ENCODE measurements at regions of chr5 and their contacts with region 1.

Region 1: DNA sequence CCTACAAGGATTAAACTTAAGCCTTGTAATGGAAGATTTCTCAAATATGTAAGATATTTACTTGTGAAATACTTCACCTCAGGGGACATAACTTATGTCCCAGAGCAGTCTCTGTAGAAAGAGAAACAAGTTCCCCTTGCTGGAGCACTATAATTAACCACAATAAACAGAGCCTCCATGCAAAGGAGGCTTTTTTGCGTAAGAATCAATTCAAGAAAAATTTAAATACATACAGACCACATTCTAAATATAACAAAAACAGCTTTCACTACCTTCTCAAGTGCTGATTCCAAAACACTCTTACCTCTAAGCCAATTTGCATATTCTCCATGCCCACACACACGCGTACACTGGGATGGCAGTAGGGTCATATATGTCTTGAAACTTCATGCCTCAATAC is 30.7 kb upstream of the CCNB1 start:
- DNase-seq: no peak
- ATAC-seq: no peak
- H3K4me3 ChIP-seq: no peak overlapping the region
- H3K27ac ChIP-seq: no peak overlapping the region
- H3K4me1 ChIP-seq: no peaks in the 10 kb centered on the region
- H3K27me3 ChIP-seq: no peaks in the 10 kb centered on the region
- CTCF ChIP-seq: no peak

Region 2: GRCh38 chr5:68780299-68780955 is 355.9 kb before region 1 on chr5:
- CTCF ChIA-PET with region 1: no interaction called
- POLR2A ChIA-PET with region 1: no interaction called
- in situ Hi-C with region 1: no loop called
- intact Hi-C with region 1: no loop called
- DNase-seq: no peak
- ATAC-seq: no peak
- H3K4me3 ChIP-seq: no peak overlapping the region
- H3K27ac ChIP-seq: no peak overlapping the region
- H3K4me1 ChIP-seq: no peaks in the 10 kb centered on the region
- H3K27me3 ChIP-seq: no peaks in the 10 kb centered on the region
- CTCF ChIP-seq: no peak

Region 3: GRCh38 chr5:69074664-69075521 is 61.4 kb before region 1 on chr5:
- CTCF ChIA-PET with region 1: no interaction called
- POLR2A ChIA-PET with region 1: interaction called, 12 read pairs
- in situ Hi-C with region 1: no loop called
- intact Hi-C with region 1: no loop called
- DNase-seq: no peak
- ATAC-seq: peak; percentile 56
- H3K4me3 ChIP-seq: no peak overlapping the region
- H3K27ac ChIP-seq: no peak overlapping the region
- H3K4me1 ChIP-seq: no peaks in the 10 kb centered on the region
- H3K27me3 ChIP-seq: no peaks in the 10 kb centered on the region
- CTCF ChIP-seq: no peak

Region 4: DNA sequence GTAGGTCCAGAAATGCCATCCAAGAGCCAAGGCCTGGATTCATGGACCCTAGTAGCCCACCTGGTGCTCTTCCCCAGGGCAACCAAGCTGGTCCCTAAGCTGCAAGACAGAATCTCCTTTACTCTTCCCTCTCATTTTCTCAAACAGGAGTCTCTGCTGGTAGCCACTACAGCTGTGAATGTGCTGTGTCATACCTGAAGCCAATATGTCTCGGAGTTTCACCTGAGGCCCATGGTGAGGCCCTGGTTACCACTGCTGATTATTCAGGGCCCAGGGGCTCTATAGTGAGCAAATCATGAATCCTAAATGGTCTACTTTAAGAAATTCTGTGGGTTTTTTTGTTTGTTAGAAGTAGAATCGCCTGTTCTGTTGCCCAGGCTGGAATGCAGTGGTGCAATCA is 114.3 kb after region 1 on chr5:
- CTCF ChIA-PET with region 1: no interaction called
- POLR2A ChIA-PET with region 1: no interaction called
- in situ Hi-C with region 1: no loop called
- intact Hi-C with region 1: no loop called
- DNase-seq: no peak
- ATAC-seq: no peak
- H3K4me3 ChIP-seq: no peak overlapping the region
- H3K27ac ChIP-seq: 0 out of 2 replicates have a peak overlapping the region, but pooled peaks have one; percentile 8
- H3K4me1 ChIP-seq: peaks cover 3% of the 10 kb centered on the region; the same call in 1 of the 2 replicates
- H3K27me3 ChIP-seq: no peaks in the 10 kb centered on the region
- CTCF ChIP-seq: no peak

Region 5: GRCh38 chr5:69341520-69342161 is 205.3 kb after region 1 on chr5:
- CTCF ChIA-PET with region 1: no interaction called
- POLR2A ChIA-PET with region 1: interaction called, 18 read pairs
- in situ Hi-C with region 1: no loop called
- intact Hi-C with region 1: no loop called
- DNase-seq: no peak
- ATAC-seq: no peak
- H3K4me3 ChIP-seq: no peak overlapping the region
- H3K27ac ChIP-seq: no peak overlapping the region
- H3K4me1 ChIP-seq: no peaks in the 10 kb centered on the region
- H3K27me3 ChIP-seq: no peaks in the 10 kb centered on the region
- CTCF ChIP-seq: no peak

Measured in Panc1 (cell line).